Activated CD4-positive, alpha-beta memory T cell treated with anti-CD3 and anti-CD28 coated beads, Interleukin-2, amount 10 ng/mL, durations not matched to agents 7 days and 5 days (primary cell): ENCODE measurements at regions of chr2 and their contacts with region 1.

Region 1: DNA sequence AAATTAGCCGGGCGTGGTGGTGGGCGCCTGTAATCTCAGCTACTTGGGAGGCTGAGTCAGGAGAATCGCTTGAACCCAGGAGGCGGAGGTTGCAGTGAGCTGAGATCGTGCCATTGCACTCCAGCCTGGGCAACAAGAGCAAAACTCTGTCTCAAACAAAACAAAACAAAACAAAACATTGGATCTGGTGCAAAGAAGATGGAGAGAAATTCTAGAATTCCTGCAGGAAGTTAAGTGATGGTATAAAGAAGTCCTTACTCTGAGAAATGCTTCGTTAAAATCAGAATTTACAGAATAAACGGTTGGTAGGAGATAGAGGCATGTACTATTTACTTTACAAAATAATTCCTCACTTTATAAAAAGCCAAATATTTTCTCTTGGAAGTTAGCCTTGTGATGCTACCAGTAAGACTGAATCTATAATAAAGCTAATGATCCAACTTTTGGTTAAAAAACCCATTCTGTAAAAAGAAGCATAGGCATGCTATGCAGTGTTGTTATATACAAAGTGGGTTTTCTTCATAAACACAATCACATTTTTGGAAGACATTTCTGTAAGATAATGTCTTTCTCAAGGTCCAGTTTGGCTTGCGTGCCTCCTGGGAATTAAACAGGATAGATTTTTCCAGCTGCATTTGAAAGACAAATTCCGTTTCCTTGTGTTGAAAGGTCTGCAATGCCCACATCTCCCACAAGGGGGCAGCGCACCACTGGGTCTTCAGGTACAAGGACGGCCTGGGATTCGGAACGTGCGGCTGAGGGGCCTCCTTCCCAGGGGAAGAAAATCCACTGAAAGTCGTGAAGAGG is 35.6 kb upstream of the PNO1 start:
- DNase-seq: peak; percentile 79
- H3K4me3 Mint-ChIP-seq: no peak overlapping the region
- H3K27ac Mint-ChIP-seq: no peak overlapping the region
- H3K4me1 Mint-ChIP-seq: peaks cover 4% of the 10 kb centered on the region
- H3K27me3 Mint-ChIP-seq: no peaks in the 10 kb centered on the region

Region 2: DNA sequence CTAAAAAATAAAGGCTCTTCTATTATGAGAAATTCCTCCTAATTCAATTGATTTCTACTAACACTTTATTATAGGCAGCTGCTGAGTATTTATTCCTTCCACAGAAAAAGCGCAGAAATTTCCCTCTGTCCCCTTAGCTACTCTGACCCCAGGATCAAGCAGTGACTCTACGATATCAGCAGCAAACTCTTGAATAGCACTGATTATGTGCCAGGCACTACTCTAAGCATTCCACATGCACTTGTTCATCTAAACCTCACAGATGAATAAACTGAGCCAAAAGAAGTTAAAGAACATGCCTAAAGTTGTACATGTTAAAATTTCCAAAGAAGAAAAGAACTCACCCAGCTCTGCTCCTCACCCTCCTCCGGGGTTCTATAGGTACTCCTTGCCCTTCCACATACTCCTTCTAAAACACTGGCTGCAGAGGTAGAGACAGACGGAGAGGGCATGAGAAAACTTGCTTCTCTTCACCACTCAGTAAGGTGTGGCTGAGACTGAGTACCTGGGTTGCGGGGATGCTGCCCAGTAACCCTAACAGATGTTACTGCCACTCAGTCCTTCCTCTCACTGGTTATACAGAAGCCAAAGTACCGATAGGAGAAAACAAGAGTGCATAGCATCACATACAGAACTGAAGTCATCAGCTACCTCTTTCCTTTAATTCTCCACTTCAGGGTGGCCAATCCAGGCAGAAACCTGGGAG is 69.2 kb before region 1 on chr2:
- CTCF ChIA-PET with region 1: no interaction called
- POLR2A ChIA-PET with region 1: no interaction called
- DNase-seq: no peak
- H3K4me3 Mint-ChIP-seq: no peak overlapping the region
- H3K27ac Mint-ChIP-seq: no peak overlapping the region
- H3K4me1 Mint-ChIP-seq: peaks cover 3% of the 10 kb centered on the region
- H3K27me3 Mint-ChIP-seq: no peaks in the 10 kb centered on the region

Region 3: GRCh38 chr2:68282811-68283418 is 160.8 kb after region 1 on chr2:
- CTCF ChIA-PET with region 1: interaction called, 23 read pairs
- POLR2A ChIA-PET with region 1: interaction called, 4 read pairs
- DNase-seq: peak; percentile 17
- H3K4me3 Mint-ChIP-seq: no peak overlapping the region
- H3K27ac Mint-ChIP-seq: no peak overlapping the region
- H3K4me1 Mint-ChIP-seq: no peaks in the 10 kb centered on the region
- H3K27me3 Mint-ChIP-seq: peaks cover 21% of the 10 kb centered on the region

Region 4: DNA sequence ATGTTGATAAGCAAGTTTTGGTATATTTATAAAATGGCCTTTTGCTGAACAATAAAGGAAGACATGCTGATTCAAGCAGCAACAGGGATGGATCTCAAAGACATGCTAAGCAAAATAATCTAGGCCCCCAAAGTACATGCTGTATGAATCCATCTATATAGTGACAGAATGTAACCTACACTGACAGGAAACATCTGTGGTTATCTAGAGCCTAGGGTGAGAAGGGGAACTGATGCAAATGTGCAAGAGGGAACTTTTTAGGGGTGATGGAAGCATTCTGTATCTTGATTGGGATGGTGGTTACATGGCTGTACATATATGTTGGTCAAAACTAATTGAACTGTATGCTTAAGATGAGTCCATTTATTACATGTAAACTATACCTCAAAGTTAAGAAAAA is 173.4 kb after region 1 on chr2:
- CTCF ChIA-PET with region 1: interaction called, 20 read pairs
- POLR2A ChIA-PET with region 1: no interaction called
- DNase-seq: no peak
- H3K4me3 Mint-ChIP-seq: no peak overlapping the region
- H3K27ac Mint-ChIP-seq: no peak overlapping the region
- H3K4me1 Mint-ChIP-seq: no peaks in the 10 kb centered on the region
- H3K27me3 Mint-ChIP-seq: peaks cover 6% of the 10 kb centered on the region